Heart right ventricle (tissue), 16 donors: ENCODE measurements at regions of chr3 and their contacts with region 1.

Region 1: GRCh38 chr3:48157950-48158376 is 30.3 kb downstream of the CDC25A start:
- DNase-seq: peak; percentile 64 to 67
- ATAC-seq: peak; percentile 27 to 71 (median 66)
- H3K4me3 ChIP-seq: no peak overlapping the region
- H3K27ac ChIP-seq: no peak overlapping the region
- H3K4me1 ChIP-seq: peaks cover 0 to 9% (median 0%) of the 10 kb centered on the region in 9 donors
- H3K27me3 ChIP-seq: no peaks in the 10 kb centered on the region
- CTCF ChIP-seq: peak; percentile 62 to 83 (median 79)

Region 2: GRCh38 chr3:47824541-47825473 is 333.2 kb before region 1 on chr3:
- intact Hi-C with region 1: loop called in 5 of 10 experiments (anchors 5 kb)
- DNase-seq: peak; percentile 56 to 81
- ATAC-seq: peak; percentile 97 to 99 (median 98)
- H3K4me3 ChIP-seq: peak overlapping the region; percentile 81 to 100 (median 93)
- H3K27ac ChIP-seq: peak overlapping the region; percentile 62 to 89 (median 84)
- H3K4me1 ChIP-seq: peaks cover 6 to 25% (median 23%) of the 10 kb centered on the region in 9 donors
- H3K27me3 ChIP-seq: no peaks in the 10 kb centered on the region
- CTCF ChIP-seq: peak; percentile 67 to 98 (median 89)

Region 3: DNA sequence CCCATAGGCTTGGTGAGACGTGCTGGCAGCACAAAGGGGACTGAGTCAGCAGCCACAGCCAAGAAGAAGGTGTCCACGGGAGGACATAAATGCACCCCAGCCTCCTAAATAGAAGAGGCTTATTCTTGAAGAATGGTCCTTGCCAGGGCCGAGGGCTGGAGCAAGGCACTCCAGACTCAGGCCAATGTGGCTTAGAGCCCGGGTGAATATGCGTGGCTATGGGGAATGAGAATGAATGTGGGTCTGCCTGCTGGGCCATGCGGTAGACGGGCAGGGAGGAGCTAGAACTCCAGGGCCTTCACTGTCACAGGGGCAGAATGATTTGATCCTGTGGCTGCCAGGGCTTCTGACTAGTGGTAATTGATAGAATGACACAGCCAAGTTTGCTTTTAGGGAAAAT is 321.0 kb before region 1 on chr3:
- intact Hi-C with region 1: loop called in 7 of 10 experiments (anchors 5 kb)
- DNase-seq: no peak
- ATAC-seq: no peak
- H3K4me3 ChIP-seq: no peak overlapping the region
- H3K27ac ChIP-seq: no peak overlapping the region
- H3K4me1 ChIP-seq: peaks cover 0 to 14% (median 0%) of the 10 kb centered on the region in 9 donors
- H3K27me3 ChIP-seq: no peaks in the 10 kb centered on the region
- CTCF ChIP-seq: no peak